ENCODE measurements at regions of chr6 and their contacts with region 1.

Region 1: GRCh38 chr6:116371120-116371917 is 572 bp downstream of the DSE start:
- DNase-seq: peak in 8 of 9 donors; percentile 1 to 49 (median 27)
- ATAC-seq: peak; percentile 59
- H3K4me3 ChIP-seq: peak overlapping the region; percentile 64
- H3K4me3 Mint-ChIP-seq: peak overlapping the region; percentile 76 to 93 (median 86)
- H3K27ac ChIP-seq: no peak overlapping the region
- H3K27ac Mint-ChIP-seq: no peak overlapping the region
- H3K4me1 ChIP-seq: peaks cover 9 to 10% of the 10 kb centered on the region in 2 donors
- H3K4me1 Mint-ChIP-seq: peaks cover 9 to 18% (median 11%) of the 10 kb centered on the region in 7 donors
- H3K27me3 ChIP-seq: no peaks in the 10 kb centered on the region
- H3K27me3 Mint-ChIP-seq: peaks cover 5 to 71% (median 23%) of the 10 kb centered on the region in 5 donors

Region 2: DNA sequence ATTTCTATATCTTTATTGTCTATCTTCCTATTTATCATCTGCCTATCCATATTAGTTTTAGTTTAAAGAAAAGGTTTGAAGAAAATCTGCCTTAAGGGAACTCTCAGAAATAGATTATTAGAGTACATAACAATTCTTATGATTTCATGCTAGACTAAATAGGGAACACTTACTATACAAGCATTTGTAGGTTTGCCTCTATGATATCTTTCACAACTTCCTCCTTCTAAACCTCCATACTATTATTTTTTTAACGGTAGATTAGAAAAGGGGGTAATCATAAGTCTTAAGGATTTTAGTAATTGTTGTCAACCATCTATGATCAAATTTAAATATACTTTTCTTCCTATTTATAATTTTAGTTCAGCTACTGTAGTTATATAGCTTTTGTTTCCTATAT is 12.2 kb before region 1 on chr6:
- CTCF ChIA-PET with region 1: no interaction called
- POLR2A ChIA-PET with region 1: no interaction called
- intact Hi-C with region 1: no loop called
- DNase-seq: no peak
- ATAC-seq: no peak
- H3K4me3 ChIP-seq: no peak overlapping the region
- H3K4me3 Mint-ChIP-seq: no peak overlapping the region
- H3K27ac ChIP-seq: no peak overlapping the region
- H3K27ac Mint-ChIP-seq: no peak overlapping the region
- H3K4me1 ChIP-seq: no peaks in the 10 kb centered on the region
- H3K4me1 Mint-ChIP-seq: peaks cover 0 to 2% (median 0%) of the 10 kb centered on the region in 7 donors
- H3K27me3 ChIP-seq: no peaks in the 10 kb centered on the region
- H3K27me3 Mint-ChIP-seq: peaks cover 0 to 11% (median 0%) of the 10 kb centered on the region in 5 donors

Region 3: GRCh38 chr6:116392132-116393013 is 21.1 kb after region 1 on chr6:
- CTCF ChIA-PET with region 1: no interaction called
- POLR2A ChIA-PET with region 1: no interaction called
- intact Hi-C with region 1: loop called in 1 of 2 experiments (anchors 2 kb)
- DNase-seq: peak in 2 of 9 donors; percentile 8 to 15
- ATAC-seq: peak; percentile 82
- H3K4me3 ChIP-seq: no peak overlapping the region
- H3K4me3 Mint-ChIP-seq: peak overlapping the region in 2 of 10 donors; percentile 41 to 46
- H3K27ac ChIP-seq: no peak overlapping the region
- H3K27ac Mint-ChIP-seq: peak overlapping the region in 1 of 9 donors; percentile 58
- H3K4me1 ChIP-seq: peaks cover 0 to 8% of the 10 kb centered on the region in 2 donors
- H3K4me1 Mint-ChIP-seq: peaks cover 5 to 28% (median 17%) of the 10 kb centered on the region in 7 donors
- H3K27me3 ChIP-seq: no peaks in the 10 kb centered on the region
- H3K27me3 Mint-ChIP-seq: no peaks in the 10 kb centered on the region